ENCODE measurements at regions of chr20 and their contacts with region 1.

Region 1: GRCh38 chr20:34876162-34877001 is at the start of gene ACSS2:
- DNase-seq: peak; percentile 100
- H3K4me3 ChIP-seq: peak within 1 kb of the TSS; percentile 76 to 94 (median 86)
- H3K27ac ChIP-seq: peak within 1 kb of the TSS; percentile 86 to 93 (median 92)
- H3K4me1 ChIP-seq: peaks cover 0 to 55% (median 40%) of the 10 kb centered on the region in 4 donors
- H3K27me3 ChIP-seq: no peaks in the 10 kb centered on the region
- CTCF ChIP-seq: no peak
- EP300 ChIP-seq: no peak
- POLR2A ChIP-seq: peak; percentile 55 to 80
- total RNA-seq, gene ACSS2: 29.7 to 70.1 (median 34.8) TPM

Region 2: DNA sequence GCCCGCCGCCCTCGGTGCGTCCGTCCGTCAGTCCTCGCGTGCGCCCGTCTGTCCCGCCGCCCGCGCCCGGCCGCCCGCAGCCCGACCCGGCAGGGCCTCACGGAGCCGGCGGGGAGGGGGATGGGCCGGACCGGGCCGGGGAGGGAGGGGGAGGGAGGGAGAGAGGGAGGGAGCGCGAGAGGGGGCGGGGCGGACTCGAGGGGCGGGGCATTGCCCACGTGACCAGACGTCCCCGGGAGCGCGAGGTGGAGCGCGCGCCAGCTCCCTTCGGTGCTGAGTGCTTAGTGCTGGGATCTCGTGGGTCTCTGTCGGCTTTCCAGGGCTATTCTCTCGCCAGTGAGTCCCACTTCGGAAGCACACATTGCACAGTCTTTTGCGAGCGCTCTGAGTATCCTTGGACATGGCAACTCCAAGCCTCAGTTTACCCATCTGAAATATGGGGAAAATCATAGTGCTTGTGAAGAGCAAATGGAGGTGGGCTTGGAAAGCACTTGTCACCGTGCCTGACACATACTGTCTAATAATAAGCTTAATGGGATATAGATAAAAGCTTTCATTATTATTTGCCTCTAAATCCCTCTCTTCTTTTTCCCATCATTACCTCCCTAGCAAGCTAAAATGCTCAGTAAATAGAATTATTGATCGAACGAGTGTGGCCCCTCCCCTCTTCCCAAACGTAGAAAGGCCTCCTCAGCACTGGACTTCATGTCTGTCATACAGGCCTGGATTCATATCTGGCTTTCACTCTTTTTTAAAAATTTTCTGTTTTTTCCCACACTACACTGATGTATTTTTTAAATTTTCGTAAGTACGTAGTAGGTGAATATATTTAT is 50.6 kb before region 1 on chr20 and contains the start of gene NCOA6:
- intact Hi-C with region 1: loop called (anchors 5 kb)
- DNase-seq: peak; percentile 94
- H3K4me3 ChIP-seq: peak within 1 kb of the TSS; percentile 70 to 89 (median 78)
- H3K27ac ChIP-seq: peak within 1 kb of the TSS; percentile 83 to 95 (median 92)
- H3K4me1 ChIP-seq: peaks cover 0 to 41% (median 25%) of the 10 kb centered on the region in 4 donors
- H3K27me3 ChIP-seq: no peaks in the 10 kb centered on the region
- CTCF ChIP-seq: no peak
- EP300 ChIP-seq: no peak
- POLR2A ChIP-seq: no peak
- total RNA-seq, gene NCOA6: 16.9 to 24.9 (median 20.4) TPM

Region 3: GRCh38 chr20:34955232-34956040 is 79.1 kb after region 1 on chr20 and contains the starts of genes GSS and MYH7B:
- intact Hi-C with region 1: loop called (anchors 1 kb)
- DNase-seq: peak; percentile 98
- H3K4me3 ChIP-seq: peak within 1 kb of the TSS; percentile 60 to 81 (median 74)
- H3K27ac ChIP-seq: peak within 1 kb of the TSS; percentile 89 to 94 (median 91)
- H3K4me1 ChIP-seq: peaks cover 0 to 15% (median 14%) of the 10 kb centered on the region in 4 donors
- H3K27me3 ChIP-seq: no peaks in the 10 kb centered on the region
- CTCF ChIP-seq: peak; percentile 33 to 62 (median 53)
- EP300 ChIP-seq: no peak
- POLR2A ChIP-seq: peak; percentile 45 to 73
- total RNA-seq, gene GSS: 22.9 to 30.5 (median 25.5) TPM
- total RNA-seq, gene MYH7B: under 0.01 to 0.83 (median 0.60) TPM

Region 4: GRCh38 chr20:35277531-35278395 is 401.4 kb after region 1 on chr20 and contains the start of gene MMP24OS:
- intact Hi-C with region 1: loop called (anchors 5 kb)
- DNase-seq: peak; percentile 96
- H3K4me3 ChIP-seq: peak within 1 kb of the TSS; percentile 80 to 89 (median 86)
- H3K27ac ChIP-seq: peak within 1 kb of the TSS; percentile 95 to 99 (median 98)
- H3K4me1 ChIP-seq: peaks cover 0 to 30% (median 27%) of the 10 kb centered on the region in 4 donors
- H3K27me3 ChIP-seq: no peaks in the 10 kb centered on the region
- CTCF ChIP-seq: peak in 1 of 4 experiments; percentile 21
- EP300 ChIP-seq: peak in 1 of 4 donors; percentile 39
- POLR2A ChIP-seq: peak; percentile 80 to 90
- total RNA-seq, gene MMP24OS: 23.2 to 39.8 (median 29.4) TPM